ENCODE measurements at regions of chr17 and their contacts with region 1.

Region 1: DNA sequence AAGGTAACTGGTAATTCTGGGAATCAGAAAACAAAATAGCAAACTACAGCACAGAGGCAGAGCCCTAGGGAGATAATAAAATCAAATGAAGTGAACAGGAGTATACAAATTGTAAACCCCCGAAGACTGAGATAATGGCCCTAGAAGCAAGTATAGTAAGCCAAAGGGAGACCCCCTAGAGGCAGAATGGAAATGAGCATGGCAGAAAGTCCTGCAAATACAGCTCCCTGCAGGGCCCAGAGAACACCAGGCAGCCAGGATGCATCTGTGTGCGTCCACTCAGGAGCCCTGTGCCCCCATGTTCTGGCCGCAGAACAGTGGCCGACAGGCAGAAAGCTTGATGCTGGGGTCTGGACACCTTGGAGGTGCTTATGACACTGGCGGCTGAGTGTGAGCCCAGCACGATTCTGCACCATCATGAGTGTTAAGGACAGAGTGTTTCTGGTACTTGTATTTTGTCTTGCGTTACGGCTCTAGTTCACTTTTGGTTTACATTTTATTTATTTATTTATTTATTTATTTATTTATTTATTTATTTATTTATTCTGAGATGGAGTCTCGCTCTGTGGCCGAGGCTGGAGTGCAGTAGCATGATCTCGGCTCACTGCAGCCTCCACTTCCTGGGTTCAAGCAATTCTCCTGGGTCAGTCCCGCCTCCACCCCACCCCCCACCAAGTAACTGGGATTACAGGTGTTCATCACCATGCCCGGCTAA is 48.7 kb downstream of the RGS9 start:
- DNase-seq: no peak
- H3K4me3 ChIP-seq: no peak overlapping the region
- H3K27ac ChIP-seq: no peak overlapping the region
- H3K4me1 ChIP-seq: peaks cover 6% of the 10 kb centered on the region
- H3K27me3 ChIP-seq: no peaks in the 10 kb centered on the region
- CTCF ChIP-seq: no peak

Region 2: DNA sequence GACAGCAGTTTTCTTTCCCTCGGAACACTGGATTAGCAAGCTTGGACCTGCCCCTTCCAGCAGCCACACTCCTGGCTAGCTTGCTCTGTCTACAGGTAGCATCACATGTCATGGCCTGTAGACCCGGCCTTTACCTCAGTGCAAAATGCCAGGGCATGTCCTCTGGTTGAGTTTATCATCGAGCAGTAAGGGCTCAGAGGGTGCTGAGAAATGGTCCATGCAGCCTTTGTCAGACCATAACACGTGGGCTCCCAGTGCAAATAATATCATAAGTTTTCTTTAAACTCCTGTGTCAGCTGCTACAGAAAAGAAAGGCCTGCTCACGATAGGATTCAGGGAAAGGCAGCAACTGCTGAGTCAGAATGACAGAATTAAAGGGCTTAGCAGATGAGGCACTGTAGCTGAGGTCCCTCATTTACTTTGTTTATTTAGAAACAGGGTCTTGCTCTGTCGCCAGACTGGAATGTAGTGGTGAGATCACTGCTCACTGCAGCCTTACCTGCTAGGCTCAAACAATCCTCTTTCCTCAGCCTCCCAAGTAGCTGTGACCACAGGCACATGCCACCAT is 121.3 kb before region 1 on chr17:
- CTCF ChIA-PET with region 1: interaction called, 3 read pairs
- dilution Hi-C with region 1: loop called (anchors 5 kb)
- in situ Hi-C with region 1: no loop called
- intact Hi-C with region 1: no loop called
- DNase-seq: peak; percentile 96
- H3K4me3 ChIP-seq: peak overlapping the region in 1 of 3 experiments; percentile 14
- H3K27ac ChIP-seq: peak overlapping the region; percentile 62
- H3K4me1 ChIP-seq: peaks cover 45% of the 10 kb centered on the region
- H3K27me3 ChIP-seq: no peaks in the 10 kb centered on the region
- CTCF ChIP-seq: no peak

Region 3: DNA sequence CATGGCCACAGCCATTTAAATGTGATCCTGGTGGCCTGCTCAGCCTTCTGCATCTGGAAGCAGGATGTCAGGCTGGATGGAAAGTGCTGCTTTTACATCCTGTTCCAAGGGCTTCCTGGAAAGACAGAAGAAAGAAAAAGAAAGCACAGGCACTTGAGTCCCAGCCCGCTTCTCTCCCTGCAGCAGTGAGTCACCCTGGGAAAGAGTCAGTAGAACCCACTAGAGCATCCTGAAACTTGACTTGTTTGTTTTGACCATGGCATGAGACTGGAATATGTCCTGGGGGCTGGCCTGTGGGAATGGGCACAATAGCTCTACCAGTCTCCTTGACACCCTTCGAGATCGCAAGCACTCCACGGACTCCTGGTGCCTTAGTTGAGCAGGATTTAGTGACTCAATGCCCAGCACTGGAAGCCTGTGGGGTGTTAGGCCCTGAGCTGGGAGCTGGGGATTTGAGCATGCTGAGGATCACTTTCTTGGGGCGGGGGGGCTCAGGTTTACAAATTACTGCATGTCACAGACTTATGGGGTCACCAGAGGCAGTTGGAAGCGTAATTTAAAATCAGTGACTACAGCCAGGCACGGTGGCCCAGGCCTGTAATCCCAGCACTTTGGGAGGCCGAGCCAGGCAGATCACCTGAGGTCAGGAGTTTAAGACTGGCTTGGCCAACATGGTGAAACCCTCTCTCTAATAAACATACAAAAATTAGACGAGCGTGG is 107.2 kb before region 1 on chr17:
- CTCF ChIA-PET with region 1: no interaction called
- dilution Hi-C with region 1: no loop called
- in situ Hi-C with region 1: no loop called
- intact Hi-C with region 1: no loop called
- DNase-seq: peak; percentile 64
- H3K4me3 ChIP-seq: no peak overlapping the region
- H3K27ac ChIP-seq: peak overlapping the region; percentile 31
- H3K4me1 ChIP-seq: peaks cover 11% of the 10 kb centered on the region
- H3K27me3 ChIP-seq: no peaks in the 10 kb centered on the region
- CTCF ChIP-seq: no peak

Region 4: DNA sequence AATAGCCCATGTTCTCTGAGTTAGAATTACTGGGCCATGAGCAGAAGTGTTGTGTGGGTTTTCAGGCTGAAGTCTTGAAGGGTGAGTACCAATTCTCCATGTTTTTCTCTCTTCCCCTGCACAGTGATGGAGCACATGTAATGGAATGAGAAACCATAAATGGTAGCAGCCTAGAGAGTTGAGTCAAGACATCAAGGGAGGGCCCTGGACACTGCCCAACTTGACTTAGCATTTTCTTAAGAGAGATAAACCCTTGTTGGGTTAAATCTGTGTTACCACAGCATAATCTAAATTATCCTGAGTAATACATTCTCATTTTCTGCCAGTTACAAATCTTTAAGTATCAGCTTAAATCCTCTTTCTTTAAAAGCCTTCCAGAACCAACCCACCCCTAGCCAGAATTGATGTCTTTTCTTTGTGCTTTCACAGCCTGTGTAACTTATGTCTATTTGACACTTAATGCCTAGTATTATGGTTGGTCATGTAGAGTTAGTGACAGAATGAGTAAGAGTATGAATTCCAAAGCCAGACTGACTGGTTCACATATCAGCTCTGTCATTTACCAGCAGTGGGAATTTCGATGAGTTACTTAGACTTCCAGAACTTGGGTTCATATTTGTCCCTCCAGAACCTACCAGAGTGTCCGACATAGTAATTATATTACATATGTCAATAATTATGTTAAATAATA is 75.7 kb before region 1 on chr17:
- CTCF ChIA-PET with region 1: no interaction called
- dilution Hi-C with region 1: loop called (anchors 5 kb)
- in situ Hi-C with region 1: no loop called
- intact Hi-C with region 1: no loop called
- DNase-seq: no peak
- H3K4me3 ChIP-seq: no peak overlapping the region
- H3K27ac ChIP-seq: no peak overlapping the region
- H3K4me1 ChIP-seq: peaks cover 18% of the 10 kb centered on the region
- H3K27me3 ChIP-seq: no peaks in the 10 kb centered on the region
- CTCF ChIP-seq: no peak

Region 5: GRCh38 chr17:65345261-65346005 is 159.6 kb after region 1 on chr17:
- CTCF ChIA-PET with region 1: no interaction called
- dilution Hi-C with region 1: no loop called
- in situ Hi-C with region 1: no loop called
- intact Hi-C with region 1: no loop called
- DNase-seq: no peak
- H3K4me3 ChIP-seq: no peak overlapping the region
- H3K27ac ChIP-seq: no peak overlapping the region
- H3K4me1 ChIP-seq: no peaks in the 10 kb centered on the region
- H3K27me3 ChIP-seq: no peaks in the 10 kb centered on the region
- CTCF ChIP-seq: no peak

Measured in mammary epithelial cell (primary cell).